ENCODE measurements at regions of chr10 and their contacts with region 1.

Region 1: DNA sequence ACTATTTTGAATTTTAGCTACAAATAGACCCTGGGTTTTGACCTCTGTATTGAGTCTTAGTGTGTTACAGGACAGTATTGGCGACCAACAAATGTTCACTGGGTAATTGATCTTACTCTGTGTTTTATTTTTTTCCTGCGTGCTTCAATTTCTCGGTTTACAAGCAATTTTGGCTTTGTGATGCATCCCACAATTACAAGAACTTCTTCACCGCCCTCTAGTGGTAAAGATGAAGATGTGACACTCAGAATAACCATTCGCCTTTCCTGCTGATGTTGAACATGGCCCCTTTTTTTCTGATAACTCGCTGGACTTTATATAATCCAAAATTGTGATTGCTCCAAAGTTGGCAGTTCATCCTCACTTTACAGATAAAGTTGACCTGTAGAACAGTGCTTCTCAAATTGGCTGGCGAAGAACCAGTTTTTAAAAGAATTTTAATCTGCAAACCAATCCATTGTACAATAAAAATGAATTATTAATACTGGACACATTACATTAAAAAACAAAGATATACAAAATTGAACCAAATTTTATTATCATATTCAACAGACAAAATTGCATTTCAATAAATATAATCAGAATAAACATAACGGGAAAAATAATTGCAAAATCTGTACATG is 20.2 kb upstream of the SMC3 start:
- DNase-seq: peak in 2 of 9 experiments; percentile 66 to 79
- ATAC-seq: peak; percentile 88
- H3K4me3 ChIP-seq: no peak overlapping the region
- H3K4me3 Mint-ChIP-seq: no peak overlapping the region
- H3K27ac ChIP-seq: no peak overlapping the region
- H3K27ac Mint-ChIP-seq: no peak overlapping the region
- H3K4me1 ChIP-seq: no peaks in the 10 kb centered on the region
- H3K4me1 Mint-ChIP-seq: peaks cover 4% of the 10 kb centered on the region
- H3K27me3 ChIP-seq: no peaks in the 10 kb centered on the region
- H3K27me3 Mint-ChIP-seq: peaks cover 16% of the 10 kb centered on the region
- CTCF ChIP-seq: peak; percentile 92

Region 2: DNA sequence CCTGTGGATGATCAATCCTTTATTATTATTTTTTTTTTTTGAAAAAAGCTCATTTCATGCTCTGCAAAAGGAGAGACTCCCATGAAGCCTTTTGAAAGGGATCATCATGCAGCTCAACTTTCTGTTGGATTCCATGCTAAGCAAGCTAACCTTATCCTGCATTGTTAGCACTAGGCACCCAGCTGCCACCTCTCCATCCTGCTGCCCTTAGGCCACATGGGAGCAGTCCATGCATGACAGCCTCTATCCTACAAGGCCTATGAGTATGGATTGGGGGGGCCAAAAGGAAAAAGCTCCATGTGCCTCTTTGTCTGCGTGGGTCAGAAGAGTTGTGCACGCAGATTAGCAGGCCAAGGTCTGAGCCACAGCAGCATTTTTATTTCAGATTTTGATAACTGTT is 261.7 kb before region 1 on chr10:
- CTCF ChIA-PET with region 1: no interaction called
- POLR2A ChIA-PET with region 1: no interaction called
- intact Hi-C with region 1: no loop called
- DNase-seq: no peak
- ATAC-seq: no peak
- H3K4me3 ChIP-seq: no peak overlapping the region
- H3K4me3 Mint-ChIP-seq: no peak overlapping the region
- H3K27ac ChIP-seq: no peak overlapping the region
- H3K27ac Mint-ChIP-seq: no peak overlapping the region
- H3K4me1 ChIP-seq: no peaks in the 10 kb centered on the region
- H3K4me1 Mint-ChIP-seq: no peaks in the 10 kb centered on the region
- H3K27me3 ChIP-seq: no peaks in the 10 kb centered on the region
- H3K27me3 Mint-ChIP-seq: no peaks in the 10 kb centered on the region
- CTCF ChIP-seq: no peak

Region 3: DNA sequence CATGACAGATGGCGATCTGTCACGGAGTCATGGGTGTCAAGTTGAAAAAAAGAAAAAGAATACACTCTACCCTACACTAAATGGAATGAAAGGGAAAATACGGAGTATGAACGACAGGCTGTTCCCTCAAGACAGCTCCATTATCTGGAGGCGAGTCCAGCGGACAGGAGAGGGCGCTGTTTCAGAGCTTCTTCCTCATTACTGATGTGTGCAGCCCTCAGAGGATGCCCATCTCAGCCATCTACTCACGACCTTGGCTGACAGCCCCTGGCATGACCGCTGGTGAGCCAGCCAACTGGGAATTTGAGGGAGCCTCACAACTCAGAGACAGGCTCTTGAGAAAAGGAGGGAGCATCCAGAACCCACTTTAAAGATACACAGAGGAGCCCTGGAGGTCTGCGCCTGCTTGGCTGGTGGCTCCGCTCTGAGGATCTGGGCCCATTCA is 192.9 kb before region 1 on chr10:
- CTCF ChIA-PET with region 1: interaction called, 88 read pairs
- POLR2A ChIA-PET with region 1: no interaction called
- intact Hi-C with region 1: loop called (anchors 1 kb)
- DNase-seq: peak; percentile 54 to 84 (median 75)
- ATAC-seq: no peak
- H3K4me3 ChIP-seq: no peak overlapping the region
- H3K4me3 Mint-ChIP-seq: no peak overlapping the region
- H3K27ac ChIP-seq: no peak overlapping the region
- H3K27ac Mint-ChIP-seq: no peak overlapping the region
- H3K4me1 ChIP-seq: peaks cover 9% of the 10 kb centered on the region
- H3K4me1 Mint-ChIP-seq: peaks cover 48% of the 10 kb centered on the region
- H3K27me3 ChIP-seq: no peaks in the 10 kb centered on the region
- H3K27me3 Mint-ChIP-seq: no peaks in the 10 kb centered on the region
- CTCF ChIP-seq: peak; percentile 63

Region 4: GRCh38 chr10:110492069-110492822 is 55.0 kb before region 1 on chr10:
- CTCF ChIA-PET with region 1: interaction called, 10 read pairs
- POLR2A ChIA-PET with region 1: no interaction called
- intact Hi-C with region 1: loop called in 1 of 2 experiments (anchors 5 kb)
- DNase-seq: no peak
- ATAC-seq: no peak
- H3K4me3 ChIP-seq: no peak overlapping the region
- H3K4me3 Mint-ChIP-seq: no peak overlapping the region
- H3K27ac ChIP-seq: no peak overlapping the region
- H3K27ac Mint-ChIP-seq: no peak overlapping the region
- H3K4me1 ChIP-seq: peaks cover 16% of the 10 kb centered on the region
- H3K4me1 Mint-ChIP-seq: peaks cover 22% of the 10 kb centered on the region
- H3K27me3 ChIP-seq: no peaks in the 10 kb centered on the region
- H3K27me3 Mint-ChIP-seq: peaks cover 6% of the 10 kb centered on the region
- CTCF ChIP-seq: no peak

Region 5: DNA sequence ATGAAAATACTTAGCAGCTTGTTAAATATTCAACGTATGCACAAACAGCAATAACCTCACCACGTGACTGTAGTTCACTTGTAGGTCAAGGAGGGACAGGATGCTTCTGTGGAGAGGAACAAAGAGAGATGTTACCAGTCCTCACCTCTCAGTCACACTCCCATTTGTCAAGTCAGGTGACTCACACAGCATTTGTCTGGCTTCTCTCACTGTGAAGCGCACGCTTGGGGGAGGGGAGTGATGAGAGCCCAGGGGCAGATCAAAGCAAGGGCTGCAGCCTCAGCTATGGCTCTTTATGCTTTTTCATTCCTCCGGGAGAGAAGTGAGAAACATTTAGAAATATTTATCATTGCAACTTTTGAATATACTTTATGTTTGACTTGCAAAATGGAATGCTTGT is 94.0 kb after region 1 on chr10:
- CTCF ChIA-PET with region 1: no interaction called
- POLR2A ChIA-PET with region 1: no interaction called
- intact Hi-C with region 1: no loop called
- DNase-seq: peak in 6 of 9 experiments; percentile 26 to 54 (median 32)
- ATAC-seq: peak; percentile 71
- H3K4me3 ChIP-seq: no peak overlapping the region
- H3K4me3 Mint-ChIP-seq: no peak overlapping the region
- H3K27ac ChIP-seq: no peak overlapping the region
- H3K27ac Mint-ChIP-seq: no peak overlapping the region
- H3K4me1 ChIP-seq: peaks cover 18% of the 10 kb centered on the region
- H3K4me1 Mint-ChIP-seq: peaks cover 26% of the 10 kb centered on the region
- H3K27me3 ChIP-seq: peaks cover 22 to 35% of the 10 kb centered on the region in 2 experiments
- H3K27me3 Mint-ChIP-seq: peaks cover 45% of the 10 kb centered on the region
- CTCF ChIP-seq: no peak